Activated CD8-positive, alpha-beta memory T cell treated with anti-CD3 and anti-CD28 coated beads, Interleukin-2, amount 10 ng/mL, durations not matched to agents 7 days and 5 days (primary cell): ENCODE measurements at regions of chr3 and their contacts with region 1.

Region 1: GRCh38 chr3:184017672-184018423 is at the start of gene ABCC5:
- DNase-seq: peak; percentile 89
- ATAC-seq: peak; percentile 97
- H3K4me3 Mint-ChIP-seq: peak within 1 kb of the TSS; percentile 99
- H3K27ac Mint-ChIP-seq: peak within 1 kb of the TSS; percentile 86
- H3K4me1 Mint-ChIP-seq: peaks cover 29% of the 10 kb centered on the region
- H3K27me3 Mint-ChIP-seq: peaks cover 18% of the 10 kb centered on the region
- total RNA-seq, gene ABCC5: 21.2 to 26.5 TPM

Region 2: GRCh38 chr3:182967218-182968204 is 1050.3 kb before region 1 on chr3:
- CTCF ChIA-PET with region 1: no interaction called
- DNase-seq: peak; percentile 62
- ATAC-seq: peak; percentile 83
- H3K4me3 Mint-ChIP-seq: peak overlapping the region; percentile 44
- H3K27ac Mint-ChIP-seq: peak overlapping the region; percentile 82
- H3K4me1 Mint-ChIP-seq: peaks cover 58% of the 10 kb centered on the region
- H3K27me3 Mint-ChIP-seq: no peaks in the 10 kb centered on the region

Region 3: GRCh38 chr3:183680061-183680460 is 337.8 kb before region 1 on chr3:
- CTCF ChIA-PET with region 1: no interaction called
- DNase-seq: no peak
- ATAC-seq: no peak
- H3K4me3 Mint-ChIP-seq: no peak overlapping the region
- H3K27ac Mint-ChIP-seq: no peak overlapping the region
- H3K4me1 Mint-ChIP-seq: peaks cover 17% of the 10 kb centered on the region
- H3K27me3 Mint-ChIP-seq: no peaks in the 10 kb centered on the region

Region 4: DNA sequence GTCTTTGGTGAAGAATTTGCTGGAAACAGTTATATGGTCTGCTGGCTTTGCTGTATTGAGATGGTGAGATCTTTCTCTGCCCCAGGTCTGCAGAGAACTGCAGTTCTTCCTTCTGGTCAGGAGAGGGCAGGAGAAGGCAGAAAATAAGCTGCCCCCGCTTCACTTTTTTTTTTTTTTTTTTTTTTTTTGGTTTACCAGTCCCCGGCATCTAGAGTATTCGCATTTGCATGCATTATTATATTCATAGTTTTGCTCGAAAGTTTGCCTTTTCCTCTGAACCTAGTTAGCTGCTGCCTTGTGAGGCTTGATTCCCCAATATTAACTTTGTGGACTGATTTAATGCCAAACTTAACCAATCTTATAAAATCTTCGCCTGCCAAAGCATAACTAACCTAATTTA is 122.6 kb before region 1 on chr3:
- CTCF ChIA-PET with region 1: interaction called, 22 read pairs
- DNase-seq: peak; percentile 54
- ATAC-seq: peak; percentile 84
- H3K4me3 Mint-ChIP-seq: no peak overlapping the region
- H3K27ac Mint-ChIP-seq: no peak overlapping the region
- H3K4me1 Mint-ChIP-seq: peaks cover 3% of the 10 kb centered on the region
- H3K27me3 Mint-ChIP-seq: peaks cover 19% of the 10 kb centered on the region

Region 5: GRCh38 chr3:184005941-184006507 is 11.8 kb before region 1 on chr3:
- CTCF ChIA-PET with region 1: interaction called, 15 read pairs
- DNase-seq: no peak
- ATAC-seq: no peak
- H3K4me3 Mint-ChIP-seq: no peak overlapping the region
- H3K27ac Mint-ChIP-seq: no peak overlapping the region
- H3K4me1 Mint-ChIP-seq: peaks cover 8% of the 10 kb centered on the region
- H3K27me3 Mint-ChIP-seq: no peaks in the 10 kb centered on the region

Region 6: DNA sequence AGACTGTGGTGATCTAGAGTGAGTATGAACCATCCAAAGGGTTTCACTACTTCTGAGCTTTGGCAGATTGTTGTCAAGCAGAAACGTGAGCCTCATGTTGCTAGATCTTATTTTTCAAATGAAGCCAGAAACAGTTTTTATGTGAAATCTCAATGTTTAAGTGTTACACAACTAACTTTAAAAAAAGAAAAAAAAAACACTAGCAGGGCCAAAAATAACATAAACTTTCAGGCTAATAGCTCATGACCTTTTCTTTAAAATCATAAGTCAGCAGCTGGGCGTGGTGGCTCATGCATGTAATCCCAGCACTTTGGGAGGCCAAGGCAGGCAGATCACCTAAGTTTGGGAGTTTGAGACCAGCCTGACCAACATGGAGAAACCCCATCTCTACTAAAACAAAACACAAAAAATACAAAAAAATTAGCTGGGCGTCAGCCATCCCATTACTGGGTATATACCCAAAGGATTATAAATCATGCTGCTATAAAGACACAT is 11.7 kb after region 1 on chr3:
- CTCF ChIA-PET with region 1: interaction called, 10 read pairs
- DNase-seq: no peak
- ATAC-seq: no peak
- H3K4me3 Mint-ChIP-seq: no peak overlapping the region
- H3K27ac Mint-ChIP-seq: no peak overlapping the region
- H3K4me1 Mint-ChIP-seq: no peaks in the 10 kb centered on the region
- H3K27me3 Mint-ChIP-seq: peaks cover 20% of the 10 kb centered on the region

Region 7: GRCh38 chr3:184085389-184085852 is 67.6 kb after region 1 on chr3:
- CTCF ChIA-PET with region 1: no interaction called
- DNase-seq: no peak
- ATAC-seq: peak; percentile 45
- H3K4me3 Mint-ChIP-seq: no peak overlapping the region
- H3K27ac Mint-ChIP-seq: peak overlapping the region; percentile 29
- H3K4me1 Mint-ChIP-seq: peaks cover 7% of the 10 kb centered on the region
- H3K27me3 Mint-ChIP-seq: no peaks in the 10 kb centered on the region